Activated CD8-positive, alpha-beta T cell treated with anti-CD3 and anti-CD28 coated beads, Interleukin-2, amount 10 ng/mL, durations not matched to agents 7 days and 5 days (primary cell): ENCODE measurements at regions of chr20 and their contacts with region 1.

Region 1: DNA sequence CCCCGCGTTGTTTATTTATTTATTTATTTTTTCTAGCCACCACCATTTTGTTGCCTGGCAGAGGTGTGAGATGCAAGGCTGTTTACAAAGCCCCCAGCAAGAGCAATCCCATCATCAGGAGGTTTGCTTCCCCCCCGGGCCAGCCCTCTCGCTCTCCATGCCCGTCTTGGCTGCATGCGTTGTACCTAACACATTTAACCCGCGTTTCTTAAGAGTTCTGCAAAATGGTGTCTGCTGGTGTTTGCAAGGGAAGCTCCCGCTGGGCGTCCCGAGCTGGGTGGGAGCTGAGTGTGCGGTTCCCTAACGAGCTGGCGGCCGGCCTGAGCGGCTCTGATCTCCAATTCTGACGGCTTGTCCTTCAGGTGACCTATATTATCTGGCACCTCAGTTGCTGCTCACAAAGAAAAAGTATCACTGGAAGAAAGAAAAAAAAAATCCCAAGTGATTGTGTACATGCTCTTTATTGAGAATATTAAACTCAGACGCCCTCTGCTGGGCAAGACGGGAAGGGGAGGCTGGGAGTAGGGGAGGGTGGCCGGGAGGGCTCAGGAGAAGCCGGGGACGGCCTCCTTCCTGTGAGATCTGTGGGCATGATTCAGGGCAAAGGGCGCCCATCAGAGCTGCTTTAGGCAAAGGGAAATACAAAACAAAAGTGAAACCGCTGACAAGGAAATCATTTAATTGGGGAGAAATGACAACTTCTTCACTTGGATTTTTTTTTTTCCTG is 154.8 kb downstream of the BCAS1 start:
- DNase-seq: peak; percentile 99
- ATAC-seq: peak; percentile 98
- H3K4me3 Mint-ChIP-seq: peak overlapping the region; percentile 85
- H3K27ac Mint-ChIP-seq: peak overlapping the region; percentile 84
- H3K4me1 Mint-ChIP-seq: peaks cover 39% of the 10 kb centered on the region
- H3K27me3 Mint-ChIP-seq: no peaks in the 10 kb centered on the region

Region 2: GRCh38 chr20:53623454-53624211 is 292.0 kb before region 1 on chr20:
- CTCF ChIA-PET with region 1: interaction called, 12 read pairs
- POLR2A ChIA-PET with region 1: no interaction called
- DNase-seq: peak; percentile 56
- ATAC-seq: peak; percentile 75
- H3K4me3 Mint-ChIP-seq: peak overlapping the region; percentile 72
- H3K27ac Mint-ChIP-seq: peak overlapping the region; percentile 97
- H3K4me1 Mint-ChIP-seq: peaks cover 56% of the 10 kb centered on the region
- H3K27me3 Mint-ChIP-seq: no peaks in the 10 kb centered on the region

Region 3: DNA sequence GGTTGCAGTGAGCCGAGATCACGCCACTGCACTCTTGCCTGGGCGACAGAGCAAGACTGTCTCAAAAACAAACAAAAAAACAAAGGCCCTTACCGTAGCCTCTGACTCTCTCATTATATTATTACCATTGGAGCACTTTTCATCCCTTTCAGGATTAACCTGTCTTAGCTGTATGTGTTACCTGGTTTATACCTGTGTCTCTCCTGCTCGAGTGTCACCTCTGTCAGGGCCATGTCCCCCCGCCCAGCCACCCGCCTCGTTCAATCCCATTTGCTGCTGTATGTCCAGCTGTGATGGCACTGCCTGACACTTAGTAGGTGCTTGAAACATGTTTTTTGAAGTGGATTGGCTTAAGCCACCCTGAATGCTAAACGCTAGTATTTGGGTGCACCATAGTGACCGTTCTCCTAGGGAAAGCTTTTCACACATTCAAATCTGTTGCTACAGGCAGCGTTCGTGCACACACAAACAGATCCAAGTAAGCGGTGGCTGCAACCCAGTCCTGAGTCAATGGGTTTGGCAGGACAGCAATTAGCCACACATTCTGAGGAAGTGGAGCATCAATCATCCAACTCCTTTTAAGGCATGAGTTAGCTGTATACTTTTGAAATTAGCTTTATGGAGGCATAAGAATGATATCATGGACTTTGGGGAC is 223.1 kb before region 1 on chr20:
- CTCF ChIA-PET with region 1: no interaction called
- POLR2A ChIA-PET with region 1: no interaction called
- DNase-seq: no peak
- ATAC-seq: peak; percentile 43
- H3K4me3 Mint-ChIP-seq: peak overlapping the region; percentile 57
- H3K27ac Mint-ChIP-seq: peak overlapping the region; percentile 78
- H3K4me1 Mint-ChIP-seq: peaks cover 62% of the 10 kb centered on the region
- H3K27me3 Mint-ChIP-seq: no peaks in the 10 kb centered on the region

Region 4: GRCh38 chr20:53750827-53751619 is 164.6 kb before region 1 on chr20:
- CTCF ChIA-PET with region 1: interaction called, 57 read pairs
- POLR2A ChIA-PET with region 1: interaction called, 10 read pairs
- DNase-seq: peak; percentile 77
- ATAC-seq: peak; percentile 76
- H3K4me3 Mint-ChIP-seq: peak overlapping the region; percentile 56
- H3K27ac Mint-ChIP-seq: peak overlapping the region; percentile 94
- H3K4me1 Mint-ChIP-seq: peaks cover 76% of the 10 kb centered on the region
- H3K27me3 Mint-ChIP-seq: no peaks in the 10 kb centered on the region

Region 5: GRCh38 chr20:53800808-53801604 is 114.6 kb before region 1 on chr20:
- CTCF ChIA-PET with region 1: no interaction called
- POLR2A ChIA-PET with region 1: no interaction called
- DNase-seq: no peak
- ATAC-seq: no peak
- H3K4me3 Mint-ChIP-seq: no peak overlapping the region
- H3K27ac Mint-ChIP-seq: no peak overlapping the region
- H3K4me1 Mint-ChIP-seq: no peaks in the 10 kb centered on the region
- H3K27me3 Mint-ChIP-seq: no peaks in the 10 kb centered on the region

Region 6: GRCh38 chr20:53857723-53858236 is 57.8 kb before region 1 on chr20:
- CTCF ChIA-PET with region 1: interaction called, 10 read pairs
- POLR2A ChIA-PET with region 1: no interaction called
- DNase-seq: no peak
- ATAC-seq: peak; percentile 59
- H3K4me3 Mint-ChIP-seq: no peak overlapping the region
- H3K27ac Mint-ChIP-seq: peak overlapping the region; percentile 59
- H3K4me1 Mint-ChIP-seq: peaks cover 39% of the 10 kb centered on the region
- H3K27me3 Mint-ChIP-seq: no peaks in the 10 kb centered on the region

Region 7: GRCh38 chr20:53883098-53883811 is 32.4 kb before region 1 on chr20:
- CTCF ChIA-PET with region 1: interaction called, 31 read pairs
- POLR2A ChIA-PET with region 1: interaction called, 21 read pairs
- DNase-seq: no peak
- ATAC-seq: no peak
- H3K4me3 Mint-ChIP-seq: peak overlapping the region; percentile 83
- H3K27ac Mint-ChIP-seq: peak overlapping the region; percentile 62
- H3K4me1 Mint-ChIP-seq: peaks cover 80% of the 10 kb centered on the region
- H3K27me3 Mint-ChIP-seq: no peaks in the 10 kb centered on the region

Region 8: DNA sequence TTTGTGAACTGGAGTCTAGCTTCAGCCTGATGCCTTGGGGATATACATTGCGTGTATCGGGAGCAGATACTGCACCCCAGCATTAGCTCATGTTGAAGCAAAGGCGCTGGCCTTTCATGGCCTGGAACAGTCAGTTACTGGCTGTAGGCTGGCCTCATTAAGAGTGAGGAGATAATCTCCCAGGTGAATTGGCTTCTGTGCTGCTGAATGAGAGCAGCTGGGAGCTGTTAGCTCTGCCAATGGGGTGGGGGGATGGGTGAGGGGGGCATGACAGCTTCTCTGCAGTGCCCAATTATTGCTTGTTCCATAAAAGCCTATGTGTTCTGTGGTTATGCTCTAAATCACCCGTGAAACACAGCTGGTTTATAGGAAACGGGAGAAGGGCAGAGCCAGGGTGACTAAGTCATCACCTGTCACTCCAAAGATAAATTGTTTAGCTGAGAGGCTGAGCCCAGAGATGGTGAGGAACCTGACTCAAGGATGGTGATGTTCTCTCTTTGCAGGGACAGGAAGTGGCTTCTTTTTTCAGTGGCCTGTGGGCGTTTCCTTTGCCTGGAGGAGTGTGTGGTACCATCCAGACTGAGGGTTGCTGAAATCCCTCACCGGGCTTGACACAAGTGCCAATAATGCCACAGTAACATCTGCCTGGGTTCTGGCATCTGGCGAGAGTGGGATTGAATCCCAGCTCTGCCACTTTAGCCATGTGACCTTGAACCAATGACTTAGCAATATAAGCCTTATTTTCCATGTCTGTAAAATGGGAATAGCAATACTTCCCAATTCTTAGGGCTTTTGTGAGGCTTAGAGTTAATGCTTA is 16.1 kb before region 1 on chr20:
- CTCF ChIA-PET with region 1: interaction called, 52 read pairs
- POLR2A ChIA-PET with region 1: interaction called, 3 read pairs
- DNase-seq: peak; percentile 89
- ATAC-seq: peak; percentile 95
- H3K4me3 Mint-ChIP-seq: peak overlapping the region; percentile 35
- H3K27ac Mint-ChIP-seq: peak overlapping the region; percentile 92
- H3K4me1 Mint-ChIP-seq: peaks cover 79% of the 10 kb centered on the region
- H3K27me3 Mint-ChIP-seq: no peaks in the 10 kb centered on the region

Region 9: GRCh38 chr20:53939572-53940359 is 24.2 kb after region 1 on chr20:
- CTCF ChIA-PET with region 1: interaction called, 80 read pairs
- POLR2A ChIA-PET with region 1: interaction called, 4 read pairs
- DNase-seq: peak; percentile 89
- ATAC-seq: peak; percentile 82
- H3K4me3 Mint-ChIP-seq: no peak overlapping the region
- H3K27ac Mint-ChIP-seq: no peak overlapping the region
- H3K4me1 Mint-ChIP-seq: peaks cover 62% of the 10 kb centered on the region
- H3K27me3 Mint-ChIP-seq: no peaks in the 10 kb centered on the region